A549 (cell line): ENCODE measurements at regions of chr2 and their contacts with region 1.

Region 1: DNA sequence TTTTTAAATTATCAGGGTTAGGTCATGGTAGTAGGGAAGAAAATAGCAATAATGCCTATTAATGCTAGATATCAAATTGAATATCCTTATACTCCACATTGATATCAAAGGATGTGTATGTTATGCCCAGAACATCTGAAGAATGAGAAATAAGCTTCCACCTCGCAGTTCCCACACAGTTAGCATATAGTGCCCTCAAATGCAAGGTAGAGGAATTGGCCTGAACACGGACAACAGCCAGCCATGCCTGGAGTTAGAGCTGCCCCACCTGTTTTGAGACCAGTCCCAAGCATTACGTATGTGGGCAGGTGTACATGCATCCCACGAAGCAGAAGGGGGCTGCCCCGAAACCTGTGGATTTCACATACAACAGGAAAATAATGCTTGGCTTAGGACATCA is 79.6 kb downstream of the SUMO1 start:
- DNase-seq: peak in 1 of 2 experiments; percentile 39
- ATAC-seq: peak; percentile 86 to 88
- H3K4me3 ChIP-seq: no peak overlapping the region
- H3K27ac ChIP-seq: no peak overlapping the region
- H3K4me1 ChIP-seq: no peaks in the 10 kb centered on the region
- CTCF ChIP-seq: peak; percentile 49
- EP300 ChIP-seq: no peak
- POLR2A ChIP-seq: no peak
- RAD21 ChIP-seq: peak; percentile 67 to 72

Region 2: DNA sequence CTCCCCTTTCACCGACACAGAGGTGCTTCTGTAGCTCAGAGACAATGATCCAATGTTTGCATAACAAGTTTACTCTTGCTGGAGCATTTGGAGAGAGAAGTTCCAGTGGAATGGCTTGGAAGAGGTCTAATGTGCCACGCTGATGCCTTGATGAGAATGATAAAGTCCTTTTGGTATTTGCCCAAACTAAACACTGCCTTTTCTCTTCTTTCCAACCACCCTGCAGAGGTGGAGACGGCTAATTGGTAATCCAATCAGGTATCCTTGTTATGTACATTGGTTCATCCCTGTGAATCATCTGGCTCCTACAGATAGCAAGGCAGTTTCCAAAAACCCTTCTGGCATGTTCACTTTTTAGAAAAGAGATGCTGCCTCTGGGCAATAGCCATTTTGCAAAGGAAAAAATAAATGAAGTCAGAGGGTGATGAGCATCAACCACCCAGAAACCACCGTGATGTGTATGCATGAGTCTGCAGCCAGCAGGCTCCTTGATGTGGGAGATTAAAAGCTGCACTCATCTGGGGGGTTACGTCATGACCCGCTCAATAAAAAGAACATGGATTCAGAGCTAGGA is 45.1 kb before region 1 on chr2:
- CTCF ChIA-PET with region 1: no interaction called
- POLR2A ChIA-PET with region 1: no interaction called
- DNase-seq: peak in 1 of 2 experiments; percentile 27
- ATAC-seq: peak in 1 of 2 experiments; percentile 55; a peak in 3 of 6 replicates
- H3K4me3 ChIP-seq: no peak overlapping the region
- H3K27ac ChIP-seq: peak overlapping the region; percentile 56 to 79; a peak in 5 of 6 replicates
- H3K4me1 ChIP-seq: peaks cover 69% of the 10 kb centered on the region
- CTCF ChIP-seq: no peak
- EP300 ChIP-seq: peak in 1 of 2 experiments; percentile 11; a peak in 1 of 5 replicates
- POLR2A ChIP-seq: no peak
- RAD21 ChIP-seq: no peak

Region 3: DNA sequence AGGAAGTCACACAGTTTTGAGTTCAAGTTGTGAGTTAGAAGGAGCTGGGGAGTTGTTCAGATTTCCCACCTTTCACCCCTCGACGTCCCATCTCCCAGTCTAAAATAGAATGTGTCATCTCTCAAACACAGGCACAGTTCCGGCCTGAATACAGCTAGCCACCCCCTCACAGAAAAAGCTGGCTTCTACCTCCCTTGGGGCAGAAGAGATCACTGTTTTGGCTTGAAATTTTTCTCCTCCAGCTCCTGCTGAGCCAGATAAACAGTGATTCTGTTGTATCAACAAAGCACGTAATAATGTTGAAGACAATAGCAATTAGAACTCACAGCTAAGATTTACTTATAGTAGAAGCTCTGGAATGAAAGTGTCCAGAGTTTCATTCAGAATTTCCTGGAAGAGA is 11.0 kb before region 1 on chr2:
- CTCF ChIA-PET with region 1: interaction called, 11 read pairs
- POLR2A ChIA-PET with region 1: no interaction called
- DNase-seq: no peak
- ATAC-seq: no peak
- H3K4me3 ChIP-seq: no peak overlapping the region
- H3K27ac ChIP-seq: peak overlapping the region in 1 of 2 experiments; percentile 42; a peak in 1 of 6 replicates
- H3K4me1 ChIP-seq: no peaks in the 10 kb centered on the region
- CTCF ChIP-seq: no peak
- EP300 ChIP-seq: no peak
- POLR2A ChIP-seq: no peak
- RAD21 ChIP-seq: no peak